ENCODE measurements at regions of chr5 and their contacts with region 1.

Region 1: DNA sequence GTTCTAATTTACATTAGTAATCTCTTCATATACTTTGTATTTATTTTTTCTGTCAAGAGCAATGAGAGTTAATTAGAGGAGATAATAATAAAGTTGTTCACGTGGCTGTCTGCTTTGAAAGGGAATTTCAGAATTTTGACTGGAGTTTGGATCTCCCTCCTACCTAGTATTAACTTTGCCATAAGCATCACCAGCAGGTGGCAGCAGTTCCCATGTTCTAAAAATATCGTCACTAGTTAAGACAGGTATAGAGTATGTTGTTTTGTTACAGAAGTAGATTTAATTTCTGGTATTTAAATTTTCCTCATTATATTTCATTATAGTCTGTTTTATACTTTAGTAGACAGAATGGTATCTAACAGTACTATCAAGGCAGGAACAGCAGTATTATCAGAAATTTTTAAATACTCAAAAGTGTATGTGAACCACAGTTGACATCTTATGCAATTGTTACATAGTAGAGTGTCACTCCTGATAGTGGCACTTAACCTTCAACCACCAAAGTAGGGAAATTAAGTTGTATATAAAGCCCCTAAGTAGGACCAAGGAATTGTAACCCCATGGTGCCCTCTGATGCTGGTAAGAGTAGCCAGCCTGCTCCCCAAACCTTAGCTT is 20.4 kb downstream of the GNPDA1 start:
- DNase-seq: no peak
- ATAC-seq: peak; percentile 83
- H3K4me3 ChIP-seq: no peak overlapping the region
- H3K27ac ChIP-seq: no peak overlapping the region
- H3K4me1 ChIP-seq: no peaks in the 10 kb centered on the region
- H3K27me3 ChIP-seq: no peaks in the 10 kb centered on the region
- CTCF ChIP-seq: peak; percentile 60 to 71 (median 64)
- EP300 ChIP-seq: no peak
- POLR2A ChIP-seq: no peak
- RAD21 ChIP-seq: peak; percentile 64

Region 2: DNA sequence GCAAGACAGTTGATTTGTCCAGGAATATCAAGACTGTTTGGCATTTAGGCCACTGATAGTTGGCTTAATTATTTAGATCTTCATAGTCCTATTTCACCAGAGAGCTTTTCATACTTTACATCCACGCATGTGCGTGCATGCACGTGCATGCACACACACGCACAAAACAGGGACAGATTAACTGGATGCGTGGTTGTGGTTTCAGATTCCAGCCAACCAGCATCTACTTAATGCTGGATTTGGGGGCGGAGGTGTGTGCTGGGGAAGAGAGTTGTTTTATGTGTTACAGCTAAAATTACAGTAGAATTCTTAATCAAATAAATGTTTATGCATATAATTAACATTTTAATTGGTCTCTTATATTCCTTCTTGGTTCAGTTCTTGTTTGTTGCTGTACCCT is 16.3 kb before region 1 on chr5:
- CTCF ChIA-PET with region 1: interaction called, 46 read pairs
- POLR2A ChIA-PET with region 1: no interaction called
- RAD21 ChIA-PET with region 1: interaction called, 5 read pairs
- SMC1A ChIA-PET with region 1: interaction called, 35 read pairs
- in situ Hi-C with region 1: no loop called
- intact Hi-C with region 1: no loop called
- DNase-seq: no peak
- ATAC-seq: no peak
- H3K4me3 ChIP-seq: no peak overlapping the region
- H3K27ac ChIP-seq: no peak overlapping the region
- H3K4me1 ChIP-seq: no peaks in the 10 kb centered on the region
- H3K27me3 ChIP-seq: no peaks in the 10 kb centered on the region
- CTCF ChIP-seq: no peak
- EP300 ChIP-seq: no peak
- POLR2A ChIP-seq: no peak
- RAD21 ChIP-seq: no peak

Region 3: GRCh38 chr5:142133330-142134206 is 141.1 kb after region 1 on chr5:
- CTCF ChIA-PET with region 1: interaction called, 12 read pairs
- POLR2A ChIA-PET with region 1: no interaction called
- RAD21 ChIA-PET with region 1: no interaction called
- SMC1A ChIA-PET with region 1: interaction called, 7 read pairs
- in situ Hi-C with region 1: no loop called
- intact Hi-C with region 1: no loop called
- DNase-seq: no peak
- ATAC-seq: no peak
- H3K4me3 ChIP-seq: no peak overlapping the region
- H3K27ac ChIP-seq: no peak overlapping the region
- H3K4me1 ChIP-seq: no peaks in the 10 kb centered on the region
- H3K27me3 ChIP-seq: no peaks in the 10 kb centered on the region
- CTCF ChIP-seq: no peak
- EP300 ChIP-seq: no peak
- POLR2A ChIP-seq: no peak
- RAD21 ChIP-seq: no peak

Region 4: DNA sequence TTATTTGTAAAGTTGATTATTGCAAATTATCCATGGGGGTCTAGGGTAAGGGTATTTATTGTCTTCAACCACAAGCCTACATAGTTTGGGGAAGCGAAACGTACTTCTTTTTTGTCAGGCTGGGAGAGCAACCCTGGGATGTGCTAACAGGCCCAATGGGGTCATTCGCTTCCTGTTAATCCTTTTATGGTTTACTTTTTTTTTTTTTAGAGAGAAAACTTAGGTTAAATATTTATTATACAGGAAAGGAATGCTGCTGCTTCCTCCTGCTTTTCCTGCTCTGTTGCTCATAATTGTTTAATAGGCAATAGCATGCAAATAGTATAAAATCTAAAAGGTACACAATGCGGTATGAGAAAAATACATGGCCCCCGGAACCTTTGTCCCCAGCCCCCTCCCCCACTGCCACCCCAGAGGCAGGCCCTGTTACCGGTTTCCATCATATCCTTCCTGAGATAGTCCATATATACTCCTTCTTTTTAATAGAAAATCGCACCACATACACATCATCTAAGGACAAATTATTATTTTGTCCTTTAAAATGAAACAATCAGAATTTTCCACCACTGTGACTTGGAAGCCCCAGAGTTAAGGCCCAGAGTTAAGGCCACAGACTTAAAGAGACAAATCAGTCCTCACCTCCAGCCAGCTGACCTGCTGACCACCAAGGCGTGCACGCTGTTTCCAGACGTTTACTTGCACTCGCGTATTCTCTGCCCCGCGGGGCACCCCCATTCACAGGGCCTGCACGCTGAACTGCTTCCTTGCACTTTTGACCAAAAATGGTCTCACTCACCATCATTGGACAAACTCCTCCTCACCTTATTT is 200.0 kb after region 1 on chr5:
- CTCF ChIA-PET with region 1: no interaction called
- POLR2A ChIA-PET with region 1: no interaction called
- RAD21 ChIA-PET with region 1: no interaction called
- SMC1A ChIA-PET with region 1: no interaction called
- in situ Hi-C with region 1: no loop called
- intact Hi-C with region 1: no loop called
- DNase-seq: no peak
- ATAC-seq: no peak
- H3K4me3 ChIP-seq: no peak overlapping the region
- H3K27ac ChIP-seq: no peak overlapping the region
- H3K4me1 ChIP-seq: no peaks in the 10 kb centered on the region
- H3K27me3 ChIP-seq: peaks cover 0 to 2% of the 10 kb centered on the region in 2 experiments; a peak in 2 of 4 replicates
- CTCF ChIP-seq: no peak
- EP300 ChIP-seq: no peak
- POLR2A ChIP-seq: no peak
- RAD21 ChIP-seq: no peak